Heart right ventricle (tissue), 16 donors: ENCODE measurements at regions of chr17 and their contacts with region 1.

Region 1: DNA sequence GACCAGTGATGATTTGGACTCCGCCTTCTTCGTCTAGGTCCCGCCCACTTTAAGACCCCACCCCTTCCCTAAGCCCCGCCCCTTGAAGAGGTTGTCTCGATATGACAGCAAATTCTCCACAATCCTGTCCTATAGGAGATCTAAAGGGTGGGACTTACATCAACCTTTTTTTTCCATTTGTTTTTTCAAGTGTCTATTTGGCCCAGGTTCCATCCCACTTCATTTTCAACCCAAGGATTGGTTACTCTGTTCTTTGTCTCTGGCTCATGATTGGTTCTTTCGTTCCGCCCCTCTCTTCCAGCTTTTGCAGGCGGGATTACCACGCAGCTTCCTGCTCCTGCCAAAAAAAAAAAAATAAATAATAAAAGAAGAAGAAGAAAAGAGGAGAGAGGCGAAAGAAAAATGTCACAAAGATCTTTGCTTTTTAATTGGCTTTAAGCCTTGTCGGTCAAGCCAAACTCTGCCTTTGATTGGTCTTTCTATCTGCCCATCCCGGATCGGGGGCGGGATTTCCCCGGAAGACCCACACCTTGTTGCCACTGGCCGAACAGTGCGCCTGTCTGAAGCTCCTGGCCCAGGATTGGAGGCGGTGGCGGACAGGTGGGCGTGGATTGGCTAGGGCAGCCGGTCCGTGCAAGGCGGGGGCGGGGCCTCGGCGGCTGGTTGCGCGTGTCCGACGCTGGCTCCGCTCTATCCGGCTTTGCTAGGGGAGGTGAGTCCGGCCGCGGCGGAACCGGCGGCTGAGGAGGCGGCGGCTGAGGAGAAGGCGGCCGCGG is 1.2 kb upstream of the NLK start:
- DNase-seq: peak; percentile 99 to 100
- ATAC-seq: peak; percentile 98 to 99 (median 98)
- H3K4me3 ChIP-seq: peak overlapping the region; percentile 69 to 97 (median 94)
- H3K27ac ChIP-seq: peak overlapping the region; percentile 79 to 98 (median 96)
- H3K4me1 ChIP-seq: peaks cover 7 to 50% (median 41%) of the 10 kb centered on the region in 9 donors
- H3K27me3 ChIP-seq: no peaks in the 10 kb centered on the region
- CTCF ChIP-seq: no peak

Region 2: GRCh38 chr17:27939474-27940465 is 101.5 kb before region 1 on chr17:
- intact Hi-C with region 1: no loop called
- DNase-seq: no peak
- ATAC-seq: no peak
- H3K4me3 ChIP-seq: no peak overlapping the region
- H3K27ac ChIP-seq: no peak overlapping the region
- H3K4me1 ChIP-seq: no peaks in the 10 kb centered on the region
- H3K27me3 ChIP-seq: peaks cover 0 to 4% (median 0%) of the 10 kb centered on the region in 7 donors
- CTCF ChIP-seq: no peak

Region 3: GRCh38 chr17:28112220-28113005 is 71.2 kb after region 1 on chr17:
- intact Hi-C with region 1: loop called in 3 of 10 experiments (anchors 5 to 10 kb)
- DNase-seq: no peak
- ATAC-seq: peak in 7 of 8 donors; percentile 17 to 87 (median 84)
- H3K4me3 ChIP-seq: no peak overlapping the region
- H3K27ac ChIP-seq: peak overlapping the region in 9 of 10 donors; percentile 2 to 61 (median 48)
- H3K4me1 ChIP-seq: peaks cover 2 to 30% (median 22%) of the 10 kb centered on the region in 9 donors
- H3K27me3 ChIP-seq: no peaks in the 10 kb centered on the region
- CTCF ChIP-seq: no peak

Region 4: GRCh38 chr17:28118362-28118761 is 77.1 kb after region 1 on chr17:
- intact Hi-C with region 1: loop called in 3 of 10 experiments (anchors 5 to 10 kb)
- DNase-seq: no peak
- ATAC-seq: no peak
- H3K4me3 ChIP-seq: peak overlapping the region in 5 of 10 donors; percentile 1 to 28 (median 1)
- H3K27ac ChIP-seq: peak overlapping the region in 3 of 10 donors; percentile 50 to 77 (median 56)
- H3K4me1 ChIP-seq: peaks cover 0 to 44% (median 29%) of the 10 kb centered on the region in 9 donors
- H3K27me3 ChIP-seq: no peaks in the 10 kb centered on the region
- CTCF ChIP-seq: no peak